ENCODE measurements at regions of chr2 and their contacts with region 1.

Region 1: DNA sequence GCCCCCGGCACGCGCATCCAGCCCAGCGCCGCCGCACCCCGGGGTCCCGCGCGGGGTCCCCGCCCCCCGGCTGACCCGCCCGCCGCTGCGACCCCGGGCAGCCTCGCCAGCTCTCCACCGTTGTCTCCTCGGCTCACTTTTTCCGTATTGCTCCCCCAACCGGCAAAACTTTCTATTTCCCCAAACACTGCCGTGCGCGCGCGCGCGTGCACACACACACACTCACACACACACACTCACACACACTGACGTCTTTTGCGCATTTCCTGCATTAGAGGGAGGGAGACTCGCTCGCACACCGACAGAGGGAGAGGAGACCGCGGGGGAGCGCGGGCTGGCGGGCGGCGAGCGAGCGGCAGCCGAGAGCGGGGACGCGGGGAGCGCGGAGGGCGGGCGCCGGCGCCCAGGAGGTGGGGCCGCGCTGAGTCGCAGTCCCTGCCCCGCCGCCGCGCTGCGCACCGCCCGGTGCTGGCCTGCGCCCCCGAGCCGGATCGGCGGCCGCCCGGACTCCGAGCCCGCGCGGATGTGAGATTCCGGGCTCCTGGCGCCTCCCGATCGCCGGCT is 542 bp upstream of the PRKCE start:
- DNase-seq: peak; percentile 93 to 95
- ATAC-seq: peak; percentile 73 to 79 (median 76)
- H3K4me3 ChIP-seq: peak overlapping the region; percentile 94
- H3K27ac ChIP-seq: peak overlapping the region; percentile 99
- H3K4me1 ChIP-seq: peaks cover 22% of the 10 kb centered on the region
- H3K27me3 ChIP-seq: no peaks in the 10 kb centered on the region
- CTCF ChIP-seq: peak; percentile 34

Region 2: GRCh38 chr2:45329045-45329677 is 321.8 kb before region 1 on chr2:
- intact Hi-C with region 1: no loop called
- DNase-seq: no peak
- ATAC-seq: peak in 2 of 4 donors; percentile 29 to 35
- H3K4me3 ChIP-seq: no peak overlapping the region
- H3K27ac ChIP-seq: no peak overlapping the region
- H3K4me1 ChIP-seq: no peaks in the 10 kb centered on the region
- H3K27me3 ChIP-seq: no peaks in the 10 kb centered on the region
- CTCF ChIP-seq: no peak

Region 3: GRCh38 chr2:45505138-45505537 is 145.8 kb before region 1 on chr2:
- intact Hi-C with region 1: no loop called
- DNase-seq: no peak
- ATAC-seq: peak in 1 of 4 donors; percentile 30
- H3K4me3 ChIP-seq: no peak overlapping the region
- H3K27ac ChIP-seq: no peak overlapping the region
- H3K4me1 ChIP-seq: no peaks in the 10 kb centered on the region
- H3K27me3 ChIP-seq: no peaks in the 10 kb centered on the region
- CTCF ChIP-seq: no peak

Region 4: DNA sequence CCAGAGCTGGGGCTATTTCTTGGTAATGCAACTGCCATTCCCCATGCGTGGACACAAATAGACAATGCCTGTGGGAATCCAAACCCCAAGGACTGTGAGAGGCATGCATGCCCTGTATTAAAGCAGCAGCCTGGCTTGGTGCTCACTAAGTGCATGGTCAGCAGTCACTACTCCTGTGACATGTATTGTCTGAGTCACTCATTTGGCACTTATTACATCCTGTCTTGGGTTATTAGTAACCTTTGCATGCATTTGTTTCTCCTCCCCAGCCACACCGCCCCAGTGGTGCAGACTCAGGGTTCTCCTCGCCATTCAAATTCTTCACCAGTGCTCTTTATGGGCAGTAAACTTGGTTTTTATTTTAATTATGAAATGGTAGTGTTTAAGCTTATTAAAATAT is 30.7 kb after region 1 on chr2:
- intact Hi-C with region 1: loop called in 1 of 2 experiments (anchors 2 kb)
- DNase-seq: peak in 1 of 2 donors; percentile 48
- ATAC-seq: peak; percentile 94 to 98 (median 97)
- H3K4me3 ChIP-seq: no peak overlapping the region
- H3K27ac ChIP-seq: peak overlapping the region; percentile 80
- H3K4me1 ChIP-seq: peaks cover 37% of the 10 kb centered on the region
- H3K27me3 ChIP-seq: no peaks in the 10 kb centered on the region
- CTCF ChIP-seq: no peak

Region 5: DNA sequence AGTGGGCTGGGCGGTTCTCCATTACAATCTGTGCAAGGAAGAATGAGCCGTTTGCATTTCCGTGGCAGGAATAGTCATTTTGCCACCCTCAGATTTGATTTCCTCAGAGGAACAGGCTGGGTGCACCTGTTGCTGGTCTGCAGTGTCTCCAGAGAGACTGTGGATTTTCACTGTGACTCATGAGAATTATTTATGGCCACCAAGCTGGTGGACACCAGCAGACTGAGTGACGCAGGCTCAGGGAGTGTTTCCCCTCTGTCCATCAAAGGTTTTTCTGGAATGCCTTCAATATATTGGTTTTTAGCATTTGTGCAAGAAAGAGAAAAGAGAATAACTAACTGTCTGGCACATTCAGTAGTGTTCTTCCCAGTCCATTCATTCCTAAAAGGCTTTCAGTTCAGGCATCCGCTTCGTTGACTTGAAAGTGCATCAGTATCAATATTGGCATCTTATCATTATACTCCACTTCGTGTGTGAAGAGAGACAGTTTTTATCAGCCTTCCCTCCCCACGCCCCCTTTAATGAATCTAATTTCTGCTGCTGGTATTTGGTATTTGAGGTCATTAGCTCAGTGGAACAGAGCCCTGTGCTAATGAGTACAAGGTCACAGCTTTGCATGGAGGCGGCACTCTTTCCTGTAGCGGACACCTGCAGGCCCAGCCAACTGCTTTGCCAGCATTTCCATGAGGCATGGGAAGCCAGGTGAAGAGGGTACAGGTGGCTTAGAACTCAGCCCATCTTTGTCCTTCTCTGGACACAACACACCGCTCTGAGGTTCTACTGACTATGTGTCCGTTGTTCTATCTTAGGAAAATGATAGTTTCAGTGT is 40.5 kb after region 1 on chr2:
- intact Hi-C with region 1: loop called in 1 of 2 experiments (anchors 5 kb)
- DNase-seq: peak; percentile 40 to 66
- ATAC-seq: peak; percentile 95 to 98 (median 98)
- H3K4me3 ChIP-seq: peak overlapping the region; percentile 20
- H3K27ac ChIP-seq: peak overlapping the region; percentile 90
- H3K4me1 ChIP-seq: peaks cover 34% of the 10 kb centered on the region
- H3K27me3 ChIP-seq: no peaks in the 10 kb centered on the region
- CTCF ChIP-seq: no peak

Region 6: DNA sequence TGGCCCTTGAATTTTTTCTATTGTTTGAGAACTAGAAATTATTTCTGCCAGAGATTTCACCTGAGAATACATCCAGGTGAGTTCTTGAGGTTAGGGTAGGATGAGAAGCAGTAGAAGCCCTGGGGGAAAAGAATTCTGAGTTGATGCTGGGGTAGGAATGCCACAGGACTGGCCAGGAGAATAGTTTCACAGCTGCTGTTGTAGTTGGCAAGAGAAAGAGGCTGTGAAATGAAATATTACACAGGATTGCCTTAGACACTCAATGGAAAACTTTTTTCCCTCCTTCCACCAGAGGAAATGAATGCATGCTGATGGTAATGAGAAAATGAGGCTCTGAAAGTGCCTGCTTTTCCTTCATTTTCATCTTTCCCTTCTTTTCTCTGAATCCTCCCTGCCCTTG is 55.1 kb after region 1 on chr2:
- intact Hi-C with region 1: loop called (anchors 2 to 5 kb)
- DNase-seq: no peak
- ATAC-seq: peak in 1 of 4 donors; percentile 21
- H3K4me3 ChIP-seq: no peak overlapping the region
- H3K27ac ChIP-seq: peak overlapping the region; percentile 20
- H3K4me1 ChIP-seq: peaks cover 37% of the 10 kb centered on the region
- H3K27me3 ChIP-seq: no peaks in the 10 kb centered on the region
- CTCF ChIP-seq: no peak

Region 7: GRCh38 chr2:45821564-45822271 is 170.8 kb after region 1 on chr2:
- intact Hi-C with region 1: loop called in 1 of 2 experiments (anchors 2 kb)
- DNase-seq: peak; percentile 56 to 80
- ATAC-seq: peak; percentile 34 to 76 (median 68)
- H3K4me3 ChIP-seq: no peak overlapping the region
- H3K27ac ChIP-seq: peak overlapping the region; percentile 69
- H3K4me1 ChIP-seq: peaks cover 37% of the 10 kb centered on the region
- H3K27me3 ChIP-seq: no peaks in the 10 kb centered on the region
- CTCF ChIP-seq: no peak

Measured in psoas muscle (tissue), 8 donors.